Aorta (tissue), 5 donors: ENCODE measurements at regions of chr6 and their contacts with region 1.

Region 1: GRCh38 chr6:32153564-32154513 is at the start of gene PPT2:
- DNase-seq: peak; percentile 95 to 96
- ATAC-seq: peak; percentile 93
- H3K4me3 ChIP-seq: peak within 1 kb of the TSS; percentile 64 to 73
- H3K27ac ChIP-seq: peak within 1 kb of the TSS; percentile 49 to 87
- H3K4me1 ChIP-seq: peaks cover 0 to 3% of the 10 kb centered on the region in 2 donors
- H3K27me3 ChIP-seq: no peaks in the 10 kb centered on the region
- total RNA-seq, gene PPT2: 26.0 to 37.6 TPM

Region 2: DNA sequence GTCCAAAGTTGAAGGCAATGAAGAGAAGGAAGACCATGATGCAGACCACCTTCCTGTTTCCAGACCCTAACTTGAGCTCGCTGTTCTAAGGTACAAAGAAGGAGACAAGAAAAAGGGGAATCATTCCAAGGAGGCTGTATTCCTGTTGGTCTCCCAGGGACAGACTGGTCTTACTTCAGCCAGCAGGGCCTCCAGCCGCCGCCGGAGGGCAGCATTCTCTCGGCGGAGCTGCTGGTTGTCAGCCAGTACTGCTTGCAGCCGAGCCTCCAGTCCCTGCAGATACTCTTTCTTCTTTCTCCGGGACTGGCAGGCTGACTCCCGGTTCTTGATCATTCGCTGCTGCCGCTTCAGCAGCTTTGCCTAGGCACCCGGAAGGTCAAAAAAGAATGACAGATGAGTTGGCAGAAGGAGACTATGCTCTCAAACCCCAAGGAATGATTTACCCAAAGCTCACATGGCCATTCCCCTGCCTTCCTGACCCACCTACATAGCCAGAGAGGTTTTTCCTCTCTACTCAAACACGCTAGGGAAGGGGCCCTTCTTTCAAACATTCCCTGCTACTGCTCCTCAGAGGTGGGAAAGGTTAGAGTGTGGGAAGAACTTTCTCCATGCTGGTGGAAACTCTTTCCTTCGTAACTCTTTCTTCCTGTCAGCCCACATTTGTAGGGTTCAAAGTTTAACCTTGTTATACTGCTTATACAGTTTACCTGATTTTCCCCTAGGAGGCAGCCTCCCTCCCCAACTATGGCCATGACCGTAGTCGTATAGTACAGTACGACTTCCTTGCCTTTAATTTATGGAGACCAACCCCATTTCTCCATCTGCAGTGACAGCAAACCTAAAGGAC is 34.8 kb before region 1 on chr6:
- intact Hi-C with region 1: loop called (anchors 2 kb)
- DNase-seq: peak; percentile 91 to 95
- ATAC-seq: peak; percentile 83
- H3K4me3 ChIP-seq: no peak overlapping the region
- H3K27ac ChIP-seq: peak overlapping the region in 1 of 2 donors; percentile 10
- H3K4me1 ChIP-seq: no peaks in the 10 kb centered on the region
- H3K27me3 ChIP-seq: no peaks in the 10 kb centered on the region

Region 3: GRCh38 chr6:32129297-32130088 is 24.3 kb before region 1 on chr6:
- intact Hi-C with region 1: loop called in 1 of 2 experiments (anchors 1 kb)
- DNase-seq: no peak
- ATAC-seq: peak; percentile 82
- H3K4me3 ChIP-seq: peak overlapping the region; percentile 48 to 81
- H3K27ac ChIP-seq: peak overlapping the region; percentile 5 to 92
- H3K4me1 ChIP-seq: peaks cover 0 to 2% of the 10 kb centered on the region in 2 donors
- H3K27me3 ChIP-seq: no peaks in the 10 kb centered on the region